CD4-positive, alpha-beta T cell (primary cell): ENCODE measurements at regions of chr15 and their contacts with region 1.

Region 1: DNA sequence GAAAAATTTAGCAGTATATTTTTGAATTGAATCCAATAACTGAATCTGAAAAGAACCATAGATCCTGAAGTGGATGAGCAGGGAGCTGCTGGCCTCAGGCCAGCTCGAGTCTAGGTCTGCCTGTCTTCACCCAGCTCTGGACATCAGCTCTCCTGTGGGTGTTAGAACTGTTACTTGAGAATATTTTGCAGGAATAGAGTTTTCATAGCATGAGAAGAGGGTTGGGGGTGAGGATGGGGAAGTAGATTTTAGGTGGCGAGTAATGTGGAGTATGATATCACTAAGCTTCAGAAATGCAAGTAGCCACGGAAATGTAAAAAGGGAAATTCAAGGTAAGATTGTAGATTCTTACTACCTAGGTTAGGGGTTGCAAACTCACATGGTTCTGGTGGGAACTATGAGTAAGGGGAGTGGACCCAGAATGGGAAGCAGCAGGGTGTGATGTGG is 6.2 kb downstream of the RAB8B start:
- DNase-seq: no peak
- ATAC-seq: no peak
- H3K4me3 ChIP-seq: no peak overlapping the region
- H3K4me3 Mint-ChIP-seq: peak overlapping the region; percentile 68
- H3K27ac ChIP-seq: peak overlapping the region; percentile 86 to 94
- H3K27ac Mint-ChIP-seq: peak overlapping the region; percentile 95
- H3K4me1 ChIP-seq: peaks cover 67% of the 10 kb centered on the region
- H3K4me1 Mint-ChIP-seq: peaks cover 95% of the 10 kb centered on the region
- H3K27me3 ChIP-seq: no peaks in the 10 kb centered on the region
- H3K27me3 Mint-ChIP-seq: no peaks in the 10 kb centered on the region
- CTCF ChIP-seq: no peak

Region 2: DNA sequence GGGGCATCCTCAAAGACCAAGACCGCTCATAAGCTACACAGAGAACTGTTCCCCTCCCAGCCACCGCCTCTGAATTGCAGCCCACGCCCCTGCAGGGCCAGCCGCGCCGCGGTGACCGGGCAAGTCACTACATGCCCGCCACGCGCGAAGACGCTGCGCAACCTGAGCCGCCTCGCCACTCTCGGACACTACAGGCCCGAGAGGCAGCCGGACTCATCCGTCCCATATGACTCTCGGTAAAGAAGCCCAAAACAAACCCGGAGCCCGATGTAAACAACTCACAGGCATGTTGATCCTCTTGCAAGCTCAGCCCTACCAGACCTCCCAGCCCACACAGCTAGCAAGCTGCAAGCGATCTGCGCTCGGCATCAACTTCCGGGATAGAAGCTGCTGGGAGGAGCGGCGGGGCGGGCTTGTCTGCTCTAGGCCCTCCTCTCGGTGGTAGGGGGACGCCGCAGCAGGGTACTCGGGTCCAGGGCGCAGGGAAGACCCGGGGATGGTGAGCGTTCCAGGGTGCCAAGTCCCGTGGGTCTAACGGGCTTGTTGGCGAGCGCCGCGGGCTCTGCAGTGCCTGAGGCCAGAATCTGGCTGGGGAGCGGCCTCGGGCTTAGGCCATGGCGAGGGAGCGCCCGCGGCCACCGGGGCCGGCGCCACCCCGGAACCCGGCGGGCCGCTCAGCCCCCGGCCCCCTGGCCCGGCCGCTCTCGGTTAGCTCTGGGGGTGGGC is 38.3 kb before region 1 on chr15 and contains the start of gene RPS27L:
- CTCF ChIA-PET with region 1: no interaction called
- POLR2A ChIA-PET with region 1: interaction called, 103 read pairs
- intact Hi-C with region 1: loop called in 1 of 2 experiments (anchors 1 kb)
- DNase-seq: peak; percentile 74 to 92 (median 86)
- ATAC-seq: peak; percentile 97
- H3K4me3 ChIP-seq: peak within 1 kb of the TSS; percentile 95
- H3K4me3 Mint-ChIP-seq: peak within 1 kb of the TSS; percentile 100
- H3K27ac ChIP-seq: peak within 1 kb of the TSS; percentile 53 to 70
- H3K27ac Mint-ChIP-seq: peak within 1 kb of the TSS; percentile 98
- H3K4me1 ChIP-seq: peaks cover 10% of the 10 kb centered on the region
- H3K4me1 Mint-ChIP-seq: peaks cover 36% of the 10 kb centered on the region
- H3K27me3 ChIP-seq: no peaks in the 10 kb centered on the region
- H3K27me3 Mint-ChIP-seq: no peaks in the 10 kb centered on the region
- CTCF ChIP-seq: no peak
- total RNA-seq, gene RPS27L: 40.0 to 43.1 TPM

Region 3: GRCh38 chr15:63212050-63213004 is 16.7 kb after region 1 on chr15:
- CTCF ChIA-PET with region 1: interaction called, 11 read pairs
- POLR2A ChIA-PET with region 1: interaction called, 98 read pairs
- intact Hi-C with region 1: loop called (anchors 2 kb)
- DNase-seq: peak in 3 of 14 experiments; percentile 46 to 64 (median 50)
- ATAC-seq: peak; percentile 47
- H3K4me3 ChIP-seq: no peak overlapping the region
- H3K4me3 Mint-ChIP-seq: peak overlapping the region; percentile 3
- H3K27ac ChIP-seq: peak overlapping the region in 1 of 2 donors; percentile 12
- H3K27ac Mint-ChIP-seq: peak overlapping the region; percentile 40
- H3K4me1 ChIP-seq: peaks cover 41% of the 10 kb centered on the region
- H3K4me1 Mint-ChIP-seq: peaks cover 72% of the 10 kb centered on the region
- H3K27me3 ChIP-seq: no peaks in the 10 kb centered on the region
- H3K27me3 Mint-ChIP-seq: no peaks in the 10 kb centered on the region
- CTCF ChIP-seq: no peak

Region 4: DNA sequence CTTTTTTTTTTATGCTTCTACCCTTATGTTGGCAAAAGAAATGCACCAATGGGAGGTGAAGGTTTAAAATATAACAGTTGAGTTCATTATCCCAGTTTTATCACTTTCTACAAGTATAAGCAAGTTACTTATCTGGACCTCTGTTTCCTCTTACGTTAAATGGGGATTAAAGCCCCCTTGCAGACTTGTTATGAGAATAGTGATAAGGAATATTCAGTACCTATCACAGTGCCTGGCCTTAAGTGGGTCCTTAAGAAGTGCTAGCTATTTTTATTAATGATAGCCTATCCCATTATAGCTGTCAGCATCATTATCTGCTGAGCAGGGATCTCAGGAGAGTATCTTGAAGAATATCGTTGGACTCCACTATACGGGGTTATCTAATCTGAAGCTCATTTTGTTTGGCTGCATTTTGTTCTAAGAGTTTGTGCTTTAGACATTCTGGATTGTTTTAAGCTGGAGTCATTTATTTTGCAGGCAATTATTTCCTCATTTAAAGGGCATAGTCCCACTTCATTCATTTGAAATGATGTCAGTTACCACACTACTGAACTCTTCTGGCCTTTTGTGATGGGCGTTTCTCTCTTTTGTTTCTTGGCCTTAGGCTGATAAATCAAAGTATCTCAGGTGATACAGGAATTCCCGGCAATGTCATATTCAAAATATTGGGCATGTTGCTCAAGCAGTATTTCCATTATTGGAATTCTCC is 22.7 kb after region 1 on chr15:
- CTCF ChIA-PET with region 1: interaction called, 4 read pairs
- POLR2A ChIA-PET with region 1: interaction called, 98 read pairs
- intact Hi-C with region 1: loop called in 1 of 2 experiments (anchors 2 kb)
- DNase-seq: no peak
- ATAC-seq: no peak
- H3K4me3 ChIP-seq: no peak overlapping the region
- H3K4me3 Mint-ChIP-seq: no peak overlapping the region
- H3K27ac ChIP-seq: no peak overlapping the region
- H3K27ac Mint-ChIP-seq: no peak overlapping the region
- H3K4me1 ChIP-seq: peaks cover 17% of the 10 kb centered on the region
- H3K4me1 Mint-ChIP-seq: peaks cover 69% of the 10 kb centered on the region
- H3K27me3 ChIP-seq: no peaks in the 10 kb centered on the region
- H3K27me3 Mint-ChIP-seq: no peaks in the 10 kb centered on the region
- CTCF ChIP-seq: no peak

Region 5: DNA sequence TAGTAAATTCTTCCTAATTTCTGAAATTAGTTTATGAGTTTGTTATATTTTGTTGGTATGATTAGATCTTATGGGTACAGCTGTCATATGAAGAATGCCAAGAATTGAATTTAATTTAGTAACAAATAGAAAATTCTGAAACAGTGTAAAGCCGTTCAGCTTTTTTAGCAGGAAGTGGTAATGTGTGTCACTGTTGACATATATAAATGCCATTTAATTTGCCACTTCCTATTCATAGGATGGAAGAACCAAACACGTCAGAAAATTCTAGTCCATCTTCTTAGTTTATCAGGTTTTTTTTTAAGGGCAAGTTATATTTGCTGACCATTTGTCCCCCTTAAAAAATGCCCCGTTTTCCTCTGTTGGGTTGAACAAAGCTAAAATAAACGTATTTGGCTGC is 36.8 kb after region 1 on chr15:
- CTCF ChIA-PET with region 1: interaction called, 9 read pairs
- POLR2A ChIA-PET with region 1: interaction called, 176 read pairs
- intact Hi-C with region 1: loop called (anchors 1 to 5 kb)
- DNase-seq: peak in 3 of 14 experiments; percentile 48 to 83 (median 50)
- ATAC-seq: peak; percentile 81
- H3K4me3 ChIP-seq: no peak overlapping the region
- H3K4me3 Mint-ChIP-seq: peak overlapping the region; percentile 28
- H3K27ac ChIP-seq: peak overlapping the region; percentile 16 to 60
- H3K27ac Mint-ChIP-seq: peak overlapping the region; percentile 85
- H3K4me1 ChIP-seq: peaks cover 27% of the 10 kb centered on the region
- H3K4me1 Mint-ChIP-seq: peaks cover 84% of the 10 kb centered on the region
- H3K27me3 ChIP-seq: no peaks in the 10 kb centered on the region
- H3K27me3 Mint-ChIP-seq: no peaks in the 10 kb centered on the region
- CTCF ChIP-seq: no peak

Region 6: GRCh38 chr15:63246691-63247464 is 51.3 kb after region 1 on chr15:
- CTCF ChIA-PET with region 1: no interaction called
- POLR2A ChIA-PET with region 1: interaction called, 18 read pairs
- intact Hi-C with region 1: loop called in 1 of 2 experiments (anchors 5 kb)
- DNase-seq: peak in 2 of 14 experiments; percentile 58 to 68
- ATAC-seq: no peak
- H3K4me3 ChIP-seq: no peak overlapping the region
- H3K4me3 Mint-ChIP-seq: no peak overlapping the region
- H3K27ac ChIP-seq: no peak overlapping the region
- H3K27ac Mint-ChIP-seq: peak overlapping the region; percentile 64
- H3K4me1 ChIP-seq: peaks cover 27% of the 10 kb centered on the region
- H3K4me1 Mint-ChIP-seq: peaks cover 69% of the 10 kb centered on the region
- H3K27me3 ChIP-seq: no peaks in the 10 kb centered on the region
- H3K27me3 Mint-ChIP-seq: no peaks in the 10 kb centered on the region
- CTCF ChIP-seq: no peak

Region 7: DNA sequence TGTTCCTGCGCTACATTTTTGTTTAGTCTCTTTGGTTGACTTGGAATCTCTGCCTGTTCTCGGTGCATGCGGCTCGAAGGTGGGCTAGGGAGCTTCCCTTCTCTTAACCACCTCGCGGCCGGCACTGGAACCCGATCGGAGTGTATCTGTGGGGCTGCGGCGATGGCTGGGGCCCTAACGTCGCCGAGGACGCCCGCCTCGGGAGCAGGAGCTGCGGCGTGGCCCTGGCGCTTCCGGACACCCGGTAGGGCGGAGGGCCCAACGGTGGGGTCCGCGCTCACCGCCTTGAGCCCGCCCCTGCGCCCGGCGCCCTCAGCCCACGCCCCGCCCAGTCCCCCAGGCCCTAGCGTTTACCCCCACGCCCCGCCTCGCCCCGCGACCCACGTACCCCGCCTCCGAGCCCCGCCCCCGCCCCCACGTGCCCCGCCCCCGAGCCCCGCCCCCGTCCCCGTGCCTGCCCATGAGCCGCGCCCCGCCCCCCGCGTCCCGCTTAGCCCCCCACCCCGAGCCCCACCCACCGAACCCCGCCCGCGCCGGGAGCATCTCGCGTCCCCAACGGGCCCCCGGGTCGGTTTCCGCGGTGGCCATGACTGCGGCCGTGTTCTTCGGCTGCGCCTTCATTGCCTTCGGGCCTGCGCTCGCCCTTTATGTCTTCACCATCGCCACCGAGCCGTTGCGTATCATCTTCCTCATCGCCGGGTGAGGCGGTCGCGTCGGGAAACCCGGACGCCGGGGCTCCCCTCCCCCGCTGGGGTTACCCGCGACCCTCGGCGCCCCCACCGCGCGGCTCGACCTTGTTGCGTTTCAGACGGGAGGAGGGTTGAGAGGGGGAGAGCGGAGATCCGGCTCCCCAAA is 81.7 kb after region 1 on chr15 and contains the start of gene APH1B:
- CTCF ChIA-PET with region 1: interaction called, 4 read pairs
- POLR2A ChIA-PET with region 1: interaction called, 48 read pairs
- intact Hi-C with region 1: loop called in 1 of 2 experiments (anchors 2 kb)
- DNase-seq: peak; percentile 61 to 94 (median 79)
- ATAC-seq: peak; percentile 88
- H3K4me3 ChIP-seq: peak within 1 kb of the TSS; percentile 86
- H3K4me3 Mint-ChIP-seq: peak within 1 kb of the TSS; percentile 91
- H3K27ac ChIP-seq: peak within 1 kb of the TSS; percentile 71 to 80
- H3K27ac Mint-ChIP-seq: peak within 1 kb of the TSS; percentile 82
- H3K4me1 ChIP-seq: peaks cover 25% of the 10 kb centered on the region
- H3K4me1 Mint-ChIP-seq: peaks cover 48% of the 10 kb centered on the region
- H3K27me3 ChIP-seq: no peaks in the 10 kb centered on the region
- H3K27me3 Mint-ChIP-seq: no peaks in the 10 kb centered on the region
- CTCF ChIP-seq: no peak
- total RNA-seq, gene APH1B: 9.3 to 11.6 TPM